ENCODE measurements at regions of chr14 and their contacts with region 1.

Region 1: GRCh38 chr14:59964251-59965007 is 44.5 kb downstream of the LRRC9 start:
- DNase-seq: no peak
- ATAC-seq: no peak
- H3K4me3 ChIP-seq: no peak overlapping the region
- H3K27ac ChIP-seq: no peak overlapping the region
- H3K4me1 ChIP-seq: no peaks in the 10 kb centered on the region
- H3K27me3 ChIP-seq: no peaks in the 10 kb centered on the region
- CTCF ChIP-seq: no peak
- EP300 ChIP-seq: no peak
- POLR2A ChIP-seq: no peak
- RAD21 ChIP-seq: no peak

Region 2: GRCh38 chr14:59595071-59595470 is 369.4 kb before region 1 on chr14:
- CTCF ChIA-PET with region 1: no interaction called
- POLR2A ChIA-PET with region 1: no interaction called
- in situ Hi-C with region 1: no loop called
- intact Hi-C with region 1: no loop called
- DNase-seq: no peak
- ATAC-seq: no peak
- H3K4me3 ChIP-seq: no peak overlapping the region
- H3K27ac ChIP-seq: no peak overlapping the region
- H3K4me1 ChIP-seq: no peaks in the 10 kb centered on the region
- H3K27me3 ChIP-seq: no peaks in the 10 kb centered on the region
- CTCF ChIP-seq: no peak
- EP300 ChIP-seq: no peak
- POLR2A ChIP-seq: no peak
- RAD21 ChIP-seq: no peak

Region 3: DNA sequence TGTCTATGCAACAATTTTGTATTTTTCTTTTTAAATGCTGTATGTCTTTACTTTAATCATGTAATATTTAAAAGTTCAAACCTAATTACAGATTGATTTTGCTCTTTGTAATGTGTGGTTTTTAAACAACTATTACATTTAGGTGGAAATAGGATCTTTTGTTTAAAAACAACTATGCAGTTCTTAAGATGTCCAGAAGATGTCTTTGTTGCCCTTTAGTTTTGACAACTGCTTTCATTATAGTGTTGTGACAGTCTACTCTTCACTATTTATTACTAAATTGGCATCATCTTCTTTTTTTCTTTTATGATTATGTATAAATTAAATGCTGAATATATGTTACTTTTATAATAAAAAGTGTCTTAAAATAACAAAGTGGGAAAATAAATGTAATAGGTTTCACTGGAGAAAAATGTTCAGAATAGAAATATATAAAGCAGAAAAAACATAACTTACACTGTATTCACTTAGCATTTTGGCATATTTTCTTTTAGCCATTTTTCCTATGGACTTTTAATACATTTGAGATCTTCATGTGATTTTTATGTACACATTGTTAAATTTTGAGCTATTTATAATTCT is 100.2 kb after region 1 on chr14:
- CTCF ChIA-PET with region 1: no interaction called
- POLR2A ChIA-PET with region 1: no interaction called
- in situ Hi-C with region 1: no loop called
- intact Hi-C with region 1: loop called (anchors 10 kb)
- DNase-seq: peak in 2 of 4 experiments; percentile 9 to 26
- ATAC-seq: peak; percentile 63; the same call in 2 of the 3 replicates
- H3K4me3 ChIP-seq: no peak overlapping the region
- H3K27ac ChIP-seq: no peak overlapping the region
- H3K4me1 ChIP-seq: no peaks in the 10 kb centered on the region
- H3K27me3 ChIP-seq: no peaks in the 10 kb centered on the region
- CTCF ChIP-seq: peak in 2 of 3 experiments; percentile 25 to 70; a peak in 3 of 6 replicates
- EP300 ChIP-seq: no peak
- POLR2A ChIP-seq: no peak
- RAD21 ChIP-seq: peak; percentile 75 to 85

Region 4: DNA sequence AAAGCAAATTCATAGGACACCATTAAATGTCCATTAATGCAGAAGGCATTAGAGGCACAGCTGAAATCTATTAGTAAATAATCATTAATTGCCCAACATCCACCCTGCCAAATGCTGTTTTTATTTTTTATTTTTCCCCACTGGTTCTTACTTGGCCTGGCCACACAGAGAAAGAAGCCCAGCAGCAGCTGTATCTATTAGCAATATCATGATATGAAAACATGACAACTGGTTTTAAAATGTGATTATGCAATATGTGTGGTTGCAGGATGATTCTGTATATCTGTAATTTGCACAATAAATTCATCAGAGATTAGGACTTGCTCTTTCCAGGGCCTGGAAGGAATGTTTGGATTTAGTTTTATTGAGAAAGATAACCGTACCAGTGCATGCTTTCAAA is 589.4 kb after region 1 on chr14:
- CTCF ChIA-PET with region 1: no interaction called
- POLR2A ChIA-PET with region 1: no interaction called
- in situ Hi-C with region 1: no loop called
- intact Hi-C with region 1: loop called (anchors 10 kb)
- DNase-seq: no peak
- ATAC-seq: no peak
- H3K4me3 ChIP-seq: no peak overlapping the region
- H3K27ac ChIP-seq: no peak overlapping the region
- H3K4me1 ChIP-seq: no peaks in the 10 kb centered on the region; a peak in 1 of 5 replicates
- H3K27me3 ChIP-seq: no peaks in the 10 kb centered on the region; a peak in 1 of 5 replicates
- CTCF ChIP-seq: no peak
- EP300 ChIP-seq: no peak
- POLR2A ChIP-seq: no peak
- RAD21 ChIP-seq: no peak